K562 (cell line): ENCODE measurements at regions of chr5 and their contacts with region 1.

Region 1: GRCh38 chr5:139517683-139518564 is 35.4 kb upstream of the STING1 start:
- DNase-seq: peak; percentile 95 to 96 (median 96)
- ATAC-seq: peak; percentile 95
- H3K4me3 ChIP-seq: peak overlapping the region; percentile 44
- H3K27ac ChIP-seq: peak overlapping the region; percentile 90
- H3K4me1 ChIP-seq: peaks cover 14 to 17% of the 10 kb centered on the region in 2 experiments
- H3K27me3 ChIP-seq: no peaks in the 10 kb centered on the region
- CTCF ChIP-seq: peak; percentile 94 to 96 (median 95)
- EP300 ChIP-seq: peak; percentile 60; the same call in 1 of the 2 replicates
- POLR2A ChIP-seq: peak; percentile 89
- RAD21 ChIP-seq: peak; percentile 62 to 67

Region 2: DNA sequence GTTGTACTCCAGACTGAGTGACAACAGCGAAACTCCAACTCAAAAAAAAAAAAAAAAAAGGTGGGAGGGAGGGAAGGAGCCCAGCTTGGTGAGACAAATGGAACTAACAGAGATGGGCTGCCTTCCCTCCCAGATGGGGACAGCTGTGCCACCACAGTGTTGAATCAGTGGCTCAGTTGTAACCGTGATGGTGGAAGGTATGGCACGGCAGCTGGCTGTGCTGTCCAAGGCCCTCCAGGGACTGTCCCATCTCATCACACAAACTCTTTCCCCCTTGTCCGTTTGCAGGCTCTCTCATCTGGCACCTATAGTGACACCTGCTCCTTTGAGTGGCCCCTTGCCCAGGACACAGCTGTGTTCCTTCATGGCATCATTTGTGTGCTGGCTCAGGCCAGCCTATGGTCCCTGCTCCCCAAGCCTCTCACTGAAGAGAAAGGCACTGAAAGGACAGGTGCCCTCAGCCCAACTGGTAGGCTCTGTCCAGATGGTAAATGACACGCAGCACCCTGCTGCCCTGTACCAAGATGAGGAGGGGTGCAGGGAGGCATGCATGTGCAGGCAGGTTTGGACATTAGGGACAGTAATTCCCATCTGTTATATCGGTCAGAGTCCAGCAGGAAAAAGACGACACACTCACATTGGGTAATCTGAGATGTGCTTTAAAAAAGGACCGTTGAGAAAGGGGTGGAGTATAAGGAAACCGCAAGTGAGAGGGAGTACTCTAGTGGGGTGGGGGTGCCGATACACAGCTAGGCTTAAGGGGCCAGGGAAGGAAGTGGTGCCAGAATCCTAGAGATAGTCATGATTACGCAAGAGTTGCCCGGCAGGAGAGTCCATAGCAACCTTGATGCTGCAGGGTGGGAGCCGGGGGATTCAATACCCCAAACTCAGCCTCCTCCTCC is 42.8 kb before region 1 on chr5:
- CTCF ChIA-PET with region 1: no interaction called
- POLR2A ChIA-PET with region 1: interaction called, 3 read pairs
- in situ Hi-C with region 1: no loop called
- intact Hi-C with region 1: loop called (anchors 2 kb)
- DNase-seq: peak; percentile 68 to 93 (median 80)
- ATAC-seq: peak; percentile 87
- H3K4me3 ChIP-seq: no peak overlapping the region
- H3K27ac ChIP-seq: peak overlapping the region; percentile 91
- H3K4me1 ChIP-seq: peaks cover 60 to 77% of the 10 kb centered on the region in 2 experiments
- H3K27me3 ChIP-seq: no peaks in the 10 kb centered on the region
- CTCF ChIP-seq: no peak; a peak in 1 of 6 replicates
- EP300 ChIP-seq: peak; percentile 98
- POLR2A ChIP-seq: peak; percentile 62
- RAD21 ChIP-seq: peak; percentile 10 to 32; a peak in 2 of 4 replicates